ENCODE measurements at regions of chr19 and their contacts with region 1.

Region 1: DNA sequence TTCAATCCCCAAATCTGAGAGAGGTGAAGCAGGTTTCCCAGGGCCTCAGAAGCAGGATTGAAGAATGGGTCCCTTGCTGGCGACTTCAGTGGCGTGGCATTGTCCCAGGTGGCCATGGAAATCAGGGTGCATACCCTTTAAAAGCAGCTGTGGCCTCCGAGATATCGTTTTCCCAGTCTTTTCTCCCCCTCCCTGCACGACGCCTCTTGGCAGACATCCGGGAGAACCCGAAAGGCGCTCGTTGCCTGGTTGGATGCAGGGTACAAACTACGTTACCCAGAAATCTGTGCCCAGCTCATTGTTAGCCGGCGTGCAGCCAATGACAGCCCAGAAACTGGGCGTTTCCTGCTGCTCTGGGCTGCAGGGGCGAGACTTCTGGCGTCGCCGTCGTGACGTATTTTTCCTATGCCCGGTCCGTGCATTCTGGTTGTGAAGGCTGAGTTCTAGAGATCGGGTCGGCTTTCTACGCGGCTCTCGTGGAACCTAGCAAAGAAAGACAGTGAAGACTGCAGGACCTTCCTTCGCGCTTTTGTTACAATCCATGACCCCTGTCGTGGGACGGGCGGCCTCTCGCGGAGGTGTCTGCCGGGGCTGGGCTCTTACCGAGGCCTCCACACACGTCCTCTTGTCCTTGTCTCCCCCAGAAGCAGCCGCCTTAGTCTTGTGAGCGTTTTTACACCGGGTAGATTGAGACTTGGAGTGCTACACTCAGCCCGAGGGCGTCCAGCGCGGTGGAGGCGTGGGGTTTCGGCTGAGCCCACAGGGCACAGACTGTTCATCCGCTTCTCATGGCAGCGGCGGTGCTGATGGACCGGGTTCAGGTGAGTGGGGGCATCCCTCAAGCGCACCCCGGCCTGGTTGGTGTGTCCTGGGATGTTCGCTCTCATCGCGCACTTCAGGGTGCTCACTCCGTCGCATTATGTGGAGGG is at the start of gene ZNF304:
- DNase-seq: peak; percentile 95
- H3K4me3 ChIP-seq: peak within 1 kb of the TSS; percentile 42 to 73 (median 64)
- H3K27ac ChIP-seq: peak within 1 kb of the TSS; percentile 23
- H3K4me1 ChIP-seq: peaks cover 8% of the 10 kb centered on the region
- H3K27me3 ChIP-seq: no peaks in the 10 kb centered on the region
- CTCF ChIP-seq: no peak
- POLR2A ChIP-seq: peak; percentile 73
- total RNA-seq, gene ZNF304: 5.3 and 5.6 TPM in 2 replicates

Region 2: GRCh38 chr19:57240311-57241090 is 110.6 kb before region 1 on chr19 and contains the start of gene ZNF805:
- CTCF ChIA-PET with region 1: no interaction called
- POLR2A ChIA-PET with region 1: no interaction called
- dilution Hi-C with region 1: no loop called
- intact Hi-C with region 1: loop called (anchors 5 kb)
- DNase-seq: peak; percentile 95
- H3K4me3 ChIP-seq: peak within 1 kb of the TSS; percentile 93 to 99 (median 96)
- H3K27ac ChIP-seq: peak within 1 kb of the TSS; percentile 66
- H3K4me1 ChIP-seq: peaks cover 6% of the 10 kb centered on the region
- H3K27me3 ChIP-seq: no peaks in the 10 kb centered on the region
- CTCF ChIP-seq: no peak
- POLR2A ChIP-seq: peak; percentile 44
- total RNA-seq, gene ZNF805: 8.6 and 8.7 TPM in 2 replicates

Region 3: GRCh38 chr19:57362997-57363705 is 12.0 kb after region 1 on chr19 and contains the starts of genes TRAPPC2B and ZNF547:
- CTCF ChIA-PET with region 1: no interaction called
- POLR2A ChIA-PET with region 1: interaction called, 3 read pairs
- dilution Hi-C with region 1: no loop called
- intact Hi-C with region 1: loop called (anchors 1 kb)
- DNase-seq: peak; percentile 100
- H3K4me3 ChIP-seq: peak within 1 kb of the TSS; percentile 47 to 92 (median 74)
- H3K27ac ChIP-seq: peak within 1 kb of the TSS; percentile 27
- H3K4me1 ChIP-seq: peaks cover 8% of the 10 kb centered on the region
- H3K27me3 ChIP-seq: no peaks in the 10 kb centered on the region
- CTCF ChIP-seq: no peak
- POLR2A ChIP-seq: peak; percentile 70
- total RNA-seq, gene TRAPPC2B: 6.3 and 7.5 TPM in 2 replicates
- total RNA-seq, gene ZNF547: 2.7 and 3.2 TPM in 2 replicates